CD8-positive, alpha-beta memory T cell (primary cell): ENCODE measurements at regions of chr6 and their contacts with region 1.

Region 1: DNA sequence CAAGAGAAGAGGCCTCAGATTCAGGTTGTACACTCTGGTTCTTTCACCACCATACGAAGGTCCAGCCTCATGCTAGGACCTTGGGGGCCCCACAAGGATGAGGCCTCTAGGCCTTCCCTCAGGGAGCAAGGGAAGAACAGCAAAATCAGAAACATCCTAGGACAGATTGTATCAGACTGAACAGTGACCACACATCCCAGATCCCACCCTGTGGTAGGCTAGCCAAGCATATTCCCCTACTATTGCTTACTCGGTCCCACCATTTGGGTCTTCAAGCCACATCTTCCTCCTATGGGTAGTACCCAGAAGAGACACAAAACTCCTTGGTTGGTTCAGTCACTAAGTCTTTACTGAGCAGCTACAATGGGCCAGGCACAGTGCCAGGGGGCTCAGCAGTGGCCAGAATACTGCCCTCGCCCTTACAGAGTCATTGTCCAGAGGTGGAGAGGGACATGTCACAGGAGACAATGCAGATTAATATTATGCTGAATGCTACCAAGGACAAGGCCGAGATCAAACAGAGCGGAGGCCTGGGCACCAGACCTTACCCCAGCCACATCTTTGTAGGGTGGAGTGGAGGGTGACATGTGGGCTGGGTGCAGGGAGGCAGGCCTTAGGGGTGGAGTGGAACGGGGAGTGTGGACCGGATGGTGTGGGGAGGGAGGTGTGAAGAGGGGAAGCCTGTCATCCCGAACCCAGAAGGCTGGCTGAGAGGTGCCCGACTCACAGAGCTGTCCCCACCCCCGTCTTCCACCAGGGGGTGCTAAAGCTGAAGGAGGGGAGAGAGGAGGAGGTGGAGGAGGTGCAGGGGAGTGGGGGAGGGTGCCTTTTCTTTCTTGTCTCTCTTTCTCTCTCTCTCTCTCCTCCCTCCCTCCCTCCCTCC is 6.8 kb upstream of the MAPK13 start:
- DNase-seq: peak; percentile 85 to 93 (median 90)
- H3K4me3 ChIP-seq: peak overlapping the region; percentile 20
- H3K4me3 Mint-ChIP-seq: peak overlapping the region; percentile 50 to 78 (median 57)
- H3K27ac ChIP-seq: peak overlapping the region; percentile 32
- H3K27ac Mint-ChIP-seq: peak overlapping the region; percentile 84 to 99 (median 96)
- H3K4me1 ChIP-seq: peaks cover 78% of the 10 kb centered on the region
- H3K4me1 Mint-ChIP-seq: peaks cover 84 to 96% (median 87%) of the 10 kb centered on the region in 3 donors
- H3K27me3 ChIP-seq: no peaks in the 10 kb centered on the region
- H3K27me3 Mint-ChIP-seq: no peaks in the 10 kb centered on the region

Region 2: GRCh38 chr6:35973670-35974222 is 149.8 kb before region 1 on chr6:
- CTCF ChIA-PET with region 1: no interaction called
- POLR2A ChIA-PET with region 1: no interaction called
- DNase-seq: no peak
- H3K4me3 ChIP-seq: no peak overlapping the region
- H3K4me3 Mint-ChIP-seq: no peak overlapping the region
- H3K27ac ChIP-seq: no peak overlapping the region
- H3K27ac Mint-ChIP-seq: no peak overlapping the region
- H3K4me1 ChIP-seq: no peaks in the 10 kb centered on the region
- H3K4me1 Mint-ChIP-seq: no peaks in the 10 kb centered on the region
- H3K27me3 ChIP-seq: no peaks in the 10 kb centered on the region
- H3K27me3 Mint-ChIP-seq: peaks cover 3 to 6% of the 10 kb centered on the region in 2 donors

Region 3: DNA sequence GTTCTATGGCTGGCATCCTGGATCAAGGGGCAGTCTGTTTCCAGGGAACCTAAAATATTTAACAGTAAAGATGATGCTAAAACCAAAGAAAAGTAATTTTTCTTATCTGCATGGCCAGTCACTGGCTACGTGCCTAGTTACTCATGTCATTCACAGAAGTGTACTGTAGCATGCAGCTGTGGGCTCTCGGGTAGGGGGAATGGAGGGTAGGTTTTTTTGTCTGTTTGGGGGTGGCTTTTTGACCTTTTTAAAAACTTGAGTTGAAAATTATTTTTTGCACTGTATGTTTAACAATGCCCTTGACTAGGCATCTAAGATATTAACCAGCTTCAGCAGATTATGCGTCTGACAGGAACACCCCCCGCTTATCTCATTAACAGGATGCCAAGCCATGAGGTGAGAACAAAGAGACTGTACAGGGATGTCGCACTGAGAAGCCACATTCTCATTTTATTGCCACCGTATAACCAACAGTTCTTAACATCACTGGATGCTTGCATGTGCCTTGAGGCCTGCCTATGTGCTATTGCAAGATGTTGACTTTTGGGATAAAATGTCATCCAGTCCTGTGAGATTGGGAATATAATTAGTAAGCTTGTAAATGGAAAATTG is 23.5 kb before region 1 on chr6:
- CTCF ChIA-PET with region 1: interaction called, 33 read pairs
- POLR2A ChIA-PET with region 1: interaction called, 10 read pairs
- DNase-seq: peak in 4 of 5 donors; percentile 16 to 69 (median 66)
- H3K4me3 ChIP-seq: peak overlapping the region; percentile 12
- H3K4me3 Mint-ChIP-seq: peak overlapping the region; percentile 32 to 86 (median 76)
- H3K27ac ChIP-seq: no peak overlapping the region
- H3K27ac Mint-ChIP-seq: peak overlapping the region; percentile 65 to 96 (median 90)
- H3K4me1 ChIP-seq: peaks cover 40% of the 10 kb centered on the region
- H3K4me1 Mint-ChIP-seq: peaks cover 57 to 68% (median 63%) of the 10 kb centered on the region in 3 donors
- H3K27me3 ChIP-seq: no peaks in the 10 kb centered on the region
- H3K27me3 Mint-ChIP-seq: no peaks in the 10 kb centered on the region